Activated CD4-positive, alpha-beta memory T cell treated with anti-CD3 and anti-CD28 coated beads for 36 hours (primary cell): ENCODE measurements at regions of chr1 and their contacts with region 1.

Region 1: DNA sequence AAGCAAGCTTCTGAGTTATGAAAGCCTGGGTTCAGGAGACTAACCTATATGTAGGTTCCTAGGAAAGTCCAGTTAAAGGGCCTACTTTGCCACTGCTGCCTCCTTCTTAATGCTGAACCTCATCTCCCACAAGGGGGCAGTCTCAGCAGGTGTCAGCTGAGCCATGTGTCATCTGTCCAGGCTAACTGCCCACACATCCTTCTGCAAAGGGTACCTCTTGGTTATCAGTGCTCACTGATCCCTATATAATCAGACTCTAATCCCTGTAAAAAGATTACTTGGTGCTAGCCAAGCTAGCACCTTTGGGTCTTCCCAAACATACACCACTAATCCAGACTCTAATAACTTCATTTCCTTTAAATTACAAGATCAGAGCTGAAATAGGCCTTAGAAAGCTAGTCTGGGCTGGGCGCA is 9.0 kb downstream of the PRDX1 start:
- DNase-seq: peak; percentile 72
- H3K4me3 Mint-ChIP-seq: no peak overlapping the region
- H3K27ac Mint-ChIP-seq: peak overlapping the region; percentile 73
- H3K4me1 Mint-ChIP-seq: peaks cover 20% of the 10 kb centered on the region
- H3K27me3 Mint-ChIP-seq: no peaks in the 10 kb centered on the region

Region 2: GRCh38 chr1:45543581-45544417 is 31.2 kb after region 1 on chr1:
- CTCF ChIA-PET with region 1: interaction called, 14 read pairs
- POLR2A ChIA-PET with region 1: no interaction called
- intact Hi-C with region 1: no loop called
- DNase-seq: peak; percentile 87
- H3K4me3 Mint-ChIP-seq: peak overlapping the region; percentile 10
- H3K27ac Mint-ChIP-seq: peak overlapping the region; percentile 60
- H3K4me1 Mint-ChIP-seq: peaks cover 26% of the 10 kb centered on the region
- H3K27me3 Mint-ChIP-seq: no peaks in the 10 kb centered on the region

Region 3: GRCh38 chr1:45550401-45551351 is 38.0 kb after region 1 on chr1 and contains the start of gene AKR1A1:
- CTCF ChIA-PET with region 1: interaction called, 14 read pairs
- POLR2A ChIA-PET with region 1: interaction called, 4 read pairs
- intact Hi-C with region 1: no loop called
- DNase-seq: peak; percentile 92
- H3K4me3 Mint-ChIP-seq: peak within 1 kb of the TSS; percentile 94
- H3K27ac Mint-ChIP-seq: peak within 1 kb of the TSS; percentile 91
- H3K4me1 Mint-ChIP-seq: peaks cover 19% of the 10 kb centered on the region
- H3K27me3 Mint-ChIP-seq: no peaks in the 10 kb centered on the region
- total RNA-seq, gene AKR1A1: 184 TPM

Region 4: DNA sequence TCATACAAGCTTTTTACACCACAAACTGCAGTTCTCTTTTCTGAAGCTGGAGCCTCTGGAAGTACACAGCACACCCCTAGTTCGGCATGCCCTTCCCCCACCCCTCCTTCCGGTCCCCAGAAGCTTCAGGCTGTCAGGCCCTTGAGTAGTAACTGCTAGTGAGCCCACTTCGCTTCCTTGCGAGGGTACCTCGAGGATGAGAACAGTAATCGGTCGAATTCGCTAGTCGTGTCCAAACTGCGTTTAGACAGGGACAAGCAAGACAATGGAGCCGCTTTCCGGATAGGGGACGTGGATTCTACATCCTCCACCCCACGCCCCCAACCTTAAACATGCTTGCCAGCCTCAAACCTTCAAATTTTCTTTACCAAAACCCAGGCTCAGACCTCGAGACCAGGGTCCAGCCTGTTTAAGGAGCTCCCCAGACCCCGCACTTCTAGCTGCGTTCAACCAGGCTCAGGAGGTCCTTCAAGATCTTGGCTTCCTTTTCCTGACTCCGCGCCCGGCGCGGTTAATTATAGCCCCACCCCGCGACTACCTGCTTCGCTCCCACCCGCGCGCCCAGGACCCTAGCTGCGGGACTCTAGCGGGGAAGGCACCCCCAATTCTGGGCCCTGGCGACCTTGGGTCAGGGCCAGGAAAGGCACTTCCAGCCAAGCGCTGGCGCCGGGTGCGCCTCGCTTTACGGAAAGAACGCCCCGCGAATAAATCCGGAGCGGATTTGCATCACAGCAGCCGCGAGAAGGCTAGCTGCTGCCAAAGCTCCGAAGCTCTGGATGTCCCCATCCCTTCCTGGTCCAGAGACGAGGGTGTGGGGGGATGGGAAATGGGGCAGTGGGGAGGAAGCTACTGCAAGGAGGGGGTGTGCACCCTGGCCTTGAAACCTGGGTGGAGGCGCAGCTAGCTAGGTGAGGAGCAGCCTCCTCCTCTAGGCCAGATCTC is 654.1 kb after region 1 on chr1:
- CTCF ChIA-PET with region 1: no interaction called
- POLR2A ChIA-PET with region 1: no interaction called
- intact Hi-C with region 1: no loop called
- DNase-seq: peak; percentile 63
- H3K4me3 Mint-ChIP-seq: peak overlapping the region; percentile 76
- H3K27ac Mint-ChIP-seq: peak overlapping the region; percentile 72
- H3K4me1 Mint-ChIP-seq: peaks cover 16% of the 10 kb centered on the region
- H3K27me3 Mint-ChIP-seq: peaks cover 2% of the 10 kb centered on the region